Activated CD4-positive, alpha-beta T cell treated with anti-CD3 and anti-CD28 coated beads, Interleukin-2, amount 10 ng/mL, durations not matched to agents 7 days and 5 days (primary cell): ENCODE measurements at regions of chr19 and their contacts with region 1.

Region 1: GRCh38 chr19:17159466-17160393 is 55.4 kb upstream of the USE1 start:
- DNase-seq: no peak
- H3K4me3 Mint-ChIP-seq: no peak overlapping the region
- H3K27ac Mint-ChIP-seq: peak overlapping the region; percentile 64
- H3K4me1 Mint-ChIP-seq: no peaks in the 10 kb centered on the region
- H3K27me3 Mint-ChIP-seq: no peaks in the 10 kb centered on the region

Region 2: DNA sequence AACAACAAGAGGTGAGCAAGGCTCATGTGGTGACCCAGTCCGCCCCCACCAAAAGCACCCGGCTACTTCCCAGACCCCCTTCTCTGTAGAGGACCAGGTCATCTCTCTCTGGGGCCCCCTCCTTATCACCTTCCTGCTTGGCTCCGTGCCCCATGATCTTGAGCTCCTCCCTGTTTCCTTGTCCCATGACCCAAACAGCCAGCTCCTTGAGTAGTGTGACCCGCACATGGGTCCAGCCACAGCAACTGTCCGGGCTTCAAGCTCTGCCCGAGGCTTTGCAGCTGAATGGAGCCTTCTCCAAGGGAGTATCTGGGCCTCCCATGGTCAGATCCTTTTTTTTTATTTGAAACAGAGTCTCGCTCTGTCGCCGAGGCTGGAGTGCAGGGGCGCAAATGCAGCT is 22.3 kb before region 1 on chr19:
- CTCF ChIA-PET with region 1: no interaction called
- POLR2A ChIA-PET with region 1: interaction called, 10 read pairs
- DNase-seq: no peak
- H3K4me3 Mint-ChIP-seq: no peak overlapping the region
- H3K27ac Mint-ChIP-seq: no peak overlapping the region
- H3K4me1 Mint-ChIP-seq: peaks cover 23% of the 10 kb centered on the region
- H3K27me3 Mint-ChIP-seq: no peaks in the 10 kb centered on the region

Region 3: DNA sequence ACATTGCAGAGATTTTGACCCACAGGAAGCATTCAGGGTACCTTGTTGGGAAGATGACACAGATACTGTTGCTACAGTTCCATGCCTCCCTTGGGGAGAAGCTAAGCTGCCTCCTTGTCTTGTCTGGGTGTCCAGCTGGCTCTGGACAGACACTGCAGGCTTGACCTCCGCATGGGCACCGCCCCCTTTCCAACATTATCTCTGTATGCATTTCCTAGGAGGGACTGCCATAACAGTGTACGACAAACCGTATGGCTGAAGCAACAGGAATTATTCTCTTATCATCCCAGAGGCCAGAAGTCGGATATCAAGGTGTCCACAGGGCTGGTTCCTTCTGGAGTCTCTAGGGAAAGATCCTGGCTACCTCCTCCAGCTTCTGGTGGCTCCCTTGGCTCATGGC is 11.6 kb before region 1 on chr19:
- CTCF ChIA-PET with region 1: no interaction called
- POLR2A ChIA-PET with region 1: no interaction called
- DNase-seq: no peak
- H3K4me3 Mint-ChIP-seq: no peak overlapping the region
- H3K27ac Mint-ChIP-seq: no peak overlapping the region
- H3K4me1 Mint-ChIP-seq: peaks cover 2% of the 10 kb centered on the region
- H3K27me3 Mint-ChIP-seq: no peaks in the 10 kb centered on the region

Region 4: GRCh38 chr19:17215125-17215971 is 55.6 kb after region 1 on chr19 and contains the start of gene USE1:
- CTCF ChIA-PET with region 1: no interaction called
- POLR2A ChIA-PET with region 1: no interaction called
- DNase-seq: peak; percentile 93
- H3K4me3 Mint-ChIP-seq: peak within 1 kb of the TSS; percentile 76
- H3K27ac Mint-ChIP-seq: peak within 1 kb of the TSS; percentile 98
- H3K4me1 Mint-ChIP-seq: peaks cover 21% of the 10 kb centered on the region
- H3K27me3 Mint-ChIP-seq: no peaks in the 10 kb centered on the region
- total RNA-seq, gene USE1: 23.3 to 24.7 TPM